CD4-positive, alpha-beta T cell (primary cell): ENCODE measurements at regions of chr5 and their contacts with region 1.

Region 1: GRCh38 chr5:161757223-161757622 is 71.7 kb downstream of the GABRA6 start:
- DNase-seq: no peak
- ATAC-seq: no peak
- H3K4me3 ChIP-seq: no peak overlapping the region
- H3K4me3 Mint-ChIP-seq: no peak overlapping the region
- H3K27ac ChIP-seq: no peak overlapping the region
- H3K27ac Mint-ChIP-seq: no peak overlapping the region
- H3K4me1 ChIP-seq: no peaks in the 10 kb centered on the region
- H3K4me1 Mint-ChIP-seq: no peaks in the 10 kb centered on the region
- H3K27me3 ChIP-seq: no peaks in the 10 kb centered on the region
- H3K27me3 Mint-ChIP-seq: no peaks in the 10 kb centered on the region
- CTCF ChIP-seq: no peak

Region 2: GRCh38 chr5:161719157-161719556 is 38.1 kb before region 1 on chr5:
- CTCF ChIA-PET with region 1: no interaction called
- POLR2A ChIA-PET with region 1: no interaction called
- intact Hi-C with region 1: loop called in 1 of 2 experiments (anchors 1 kb)
- DNase-seq: no peak
- ATAC-seq: no peak
- H3K4me3 ChIP-seq: no peak overlapping the region
- H3K4me3 Mint-ChIP-seq: no peak overlapping the region
- H3K27ac ChIP-seq: no peak overlapping the region
- H3K27ac Mint-ChIP-seq: no peak overlapping the region
- H3K4me1 ChIP-seq: no peaks in the 10 kb centered on the region
- H3K4me1 Mint-ChIP-seq: no peaks in the 10 kb centered on the region
- H3K27me3 ChIP-seq: no peaks in the 10 kb centered on the region
- H3K27me3 Mint-ChIP-seq: no peaks in the 10 kb centered on the region
- CTCF ChIP-seq: no peak

Region 3: DNA sequence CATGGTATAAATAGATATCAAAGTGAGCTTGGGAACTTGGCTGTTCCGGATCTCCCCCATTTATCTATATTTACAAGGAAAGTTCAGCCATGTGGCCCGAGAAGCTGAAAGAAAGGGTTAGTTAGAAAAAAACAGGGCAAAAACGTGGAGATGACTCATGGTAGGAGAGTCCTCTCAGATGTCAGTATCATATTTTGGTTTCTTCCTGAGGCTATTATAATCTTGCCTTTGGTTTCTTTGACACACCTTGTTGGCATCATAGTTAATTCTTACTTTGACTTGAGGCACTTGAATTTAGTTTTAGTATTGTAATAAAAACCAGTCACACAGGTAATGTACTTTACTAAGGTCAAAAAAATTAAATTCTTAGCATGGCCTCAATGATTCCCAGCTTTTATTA is 11.8 kb before region 1 on chr5:
- CTCF ChIA-PET with region 1: no interaction called
- POLR2A ChIA-PET with region 1: no interaction called
- intact Hi-C with region 1: no loop called
- DNase-seq: no peak
- ATAC-seq: no peak
- H3K4me3 ChIP-seq: no peak overlapping the region
- H3K4me3 Mint-ChIP-seq: no peak overlapping the region
- H3K27ac ChIP-seq: no peak overlapping the region
- H3K27ac Mint-ChIP-seq: no peak overlapping the region
- H3K4me1 ChIP-seq: no peaks in the 10 kb centered on the region
- H3K4me1 Mint-ChIP-seq: no peaks in the 10 kb centered on the region
- H3K27me3 ChIP-seq: no peaks in the 10 kb centered on the region
- H3K27me3 Mint-ChIP-seq: no peaks in the 10 kb centered on the region
- CTCF ChIP-seq: no peak

Region 4: DNA sequence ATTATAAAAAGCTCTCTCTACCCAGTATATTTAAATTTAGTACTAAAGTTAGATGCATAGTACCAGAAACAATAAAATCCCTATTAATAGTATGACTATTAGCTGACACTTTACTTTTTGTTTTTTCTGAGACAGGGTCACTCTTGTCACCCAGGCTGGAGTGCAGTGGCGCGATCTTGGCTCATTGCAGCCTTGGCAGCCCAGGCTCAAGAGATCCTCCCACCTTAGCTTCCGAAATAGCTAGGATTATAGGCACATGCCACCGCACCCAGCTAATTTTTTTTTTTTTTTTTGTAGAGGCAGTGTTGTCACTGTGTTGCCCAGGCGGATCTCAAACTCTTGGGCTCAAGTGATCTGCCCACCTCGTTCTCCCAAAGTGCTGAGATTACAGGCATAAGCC is 1688.1 kb after region 1 on chr5:
- CTCF ChIA-PET with region 1: no interaction called
- POLR2A ChIA-PET with region 1: no interaction called
- intact Hi-C with region 1: no loop called
- DNase-seq: no peak
- ATAC-seq: no peak
- H3K4me3 ChIP-seq: no peak overlapping the region
- H3K4me3 Mint-ChIP-seq: no peak overlapping the region
- H3K27ac ChIP-seq: no peak overlapping the region
- H3K27ac Mint-ChIP-seq: no peak overlapping the region
- H3K4me1 ChIP-seq: no peaks in the 10 kb centered on the region
- H3K4me1 Mint-ChIP-seq: peaks cover 9% of the 10 kb centered on the region
- H3K27me3 ChIP-seq: no peaks in the 10 kb centered on the region
- H3K27me3 Mint-ChIP-seq: no peaks in the 10 kb centered on the region
- CTCF ChIP-seq: no peak